Kidney (tissue), 22 donors: ENCODE measurements at regions of chr10 and their contacts with region 1.

Region 1: DNA sequence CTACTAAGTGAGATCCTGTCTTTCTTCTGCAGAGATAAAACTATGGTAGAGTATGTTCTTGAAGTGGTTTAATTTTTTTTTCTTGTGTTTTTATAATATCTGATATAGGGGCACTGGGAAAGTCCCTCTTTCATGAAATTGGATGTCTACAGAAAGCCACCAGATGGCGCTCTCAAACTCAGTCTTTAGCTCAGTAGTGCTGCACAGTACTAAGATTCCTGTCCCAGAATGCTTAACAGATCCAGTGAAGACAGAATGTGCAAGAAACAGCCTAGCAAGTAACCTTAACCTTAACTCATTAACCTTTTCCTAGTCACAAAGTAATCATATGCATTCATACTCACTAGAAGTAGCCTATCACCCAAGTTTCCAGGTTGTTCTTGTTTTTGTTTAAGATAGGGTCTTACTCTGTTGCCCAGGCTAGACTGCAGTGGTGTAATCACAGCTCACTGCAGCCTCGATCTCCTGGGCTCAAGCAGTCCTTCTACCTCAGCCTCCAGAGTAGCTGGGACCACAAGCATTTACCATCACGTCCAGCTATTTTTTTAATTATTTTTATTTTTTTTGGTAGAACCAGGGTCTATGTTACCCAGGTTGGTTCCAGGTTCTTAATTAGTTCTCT is 56.7 kb downstream of the IDE start:
- DNase-seq: peak in 4 of 5 donors; percentile 44 to 89 (median 71)
- H3K4me3 ChIP-seq: no peak overlapping the region
- H3K27ac ChIP-seq: no peak overlapping the region
- H3K4me1 ChIP-seq: no peaks in the 10 kb centered on the region
- H3K27me3 ChIP-seq: no peaks in the 10 kb centered on the region
- CTCF ChIP-seq: peak; percentile 73

Region 2: DNA sequence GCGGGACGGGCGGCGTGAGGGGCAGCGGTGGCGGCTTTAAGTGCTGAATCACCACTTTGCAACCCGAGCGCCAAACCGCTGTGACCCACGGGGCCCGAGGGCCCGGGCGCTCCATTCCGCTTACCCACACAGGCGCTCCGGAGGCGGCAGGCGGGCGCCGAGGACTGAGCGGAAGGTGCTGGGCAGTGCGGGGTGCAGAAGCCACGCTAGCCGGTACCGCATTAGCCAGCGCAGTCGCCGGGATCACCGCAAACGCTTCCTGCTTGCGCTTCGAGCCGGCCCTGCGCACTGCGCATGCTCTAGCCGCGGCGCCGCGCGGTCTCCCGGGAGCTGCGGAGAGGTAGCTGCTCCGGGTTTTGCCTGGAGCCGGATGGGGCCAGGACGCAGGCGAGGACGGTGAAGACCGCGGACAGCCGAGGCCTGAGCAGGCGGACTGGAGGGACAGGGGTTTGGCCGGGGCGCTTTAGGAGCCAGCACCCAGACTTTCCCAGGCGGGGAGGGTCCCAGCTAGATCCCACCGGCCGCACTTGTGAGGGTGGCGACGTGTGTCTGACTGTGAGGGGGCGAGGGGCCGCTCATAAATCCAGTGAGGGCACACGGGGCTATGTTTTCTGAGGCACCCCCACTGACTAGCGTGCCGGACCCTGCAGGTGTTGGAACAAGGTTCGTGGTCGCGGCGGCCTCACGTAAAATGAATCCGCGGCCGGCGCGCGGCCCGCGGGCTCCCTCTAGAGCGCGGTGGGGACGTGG is 56.8 kb after region 1 on chr10 and contains the start of gene IDE:
- intact Hi-C with region 1: loop called (anchors 5 kb)
- DNase-seq: peak; percentile 93 to 95 (median 94)
- H3K4me3 ChIP-seq: peak within 1 kb of the TSS; percentile 70 to 93 (median 88)
- H3K27ac ChIP-seq: peak within 1 kb of the TSS; percentile 91 to 96
- H3K4me1 ChIP-seq: peaks cover 5 to 14% (median 5%) of the 10 kb centered on the region in 3 donors
- H3K27me3 ChIP-seq: no peaks in the 10 kb centered on the region
- CTCF ChIP-seq: peak; percentile 81
- total RNA-seq, gene IDE: 40.5 TPM